ENCODE measurements at regions of chr17 and their contacts with region 1.

Region 1: DNA sequence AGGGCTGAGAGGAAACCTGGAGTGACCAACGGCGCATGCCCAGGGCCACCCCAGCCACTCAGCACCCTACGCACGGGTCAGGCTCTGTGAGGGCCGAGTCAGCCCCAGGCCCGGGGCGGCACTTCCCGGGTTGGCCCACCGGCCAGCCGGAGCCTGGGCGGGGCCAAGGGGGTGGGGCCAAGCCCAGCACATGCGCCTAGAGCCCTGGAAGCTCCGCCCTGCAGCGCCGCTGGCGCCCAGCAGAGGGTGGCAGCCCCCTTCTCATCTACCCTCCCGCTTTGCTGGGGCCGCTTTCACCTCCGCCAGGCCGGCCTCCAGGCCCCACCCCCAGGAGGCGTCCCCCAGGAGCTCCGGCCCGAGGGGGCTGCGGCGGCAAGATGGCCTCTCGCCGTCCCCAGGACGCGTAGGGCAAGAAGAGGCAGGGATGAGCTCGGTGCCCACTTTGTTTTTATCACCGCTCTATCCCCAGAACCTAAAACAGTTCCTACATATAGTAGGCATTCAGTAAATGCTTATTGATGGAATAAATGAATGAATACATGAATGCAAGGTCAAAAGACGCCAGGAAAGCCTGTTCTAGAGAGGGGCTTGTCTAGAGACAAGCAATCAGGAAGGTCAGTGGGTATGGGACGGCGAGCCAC is 31.3 kb downstream of the MYO18A start:
- DNase-seq: peak; percentile 91
- H3K4me3 Mint-ChIP-seq: peak overlapping the region; percentile 69
- H3K27ac Mint-ChIP-seq: peak overlapping the region; percentile 84
- H3K4me1 Mint-ChIP-seq: peaks cover 58% of the 10 kb centered on the region
- H3K27me3 Mint-ChIP-seq: no peaks in the 10 kb centered on the region

Region 2: DNA sequence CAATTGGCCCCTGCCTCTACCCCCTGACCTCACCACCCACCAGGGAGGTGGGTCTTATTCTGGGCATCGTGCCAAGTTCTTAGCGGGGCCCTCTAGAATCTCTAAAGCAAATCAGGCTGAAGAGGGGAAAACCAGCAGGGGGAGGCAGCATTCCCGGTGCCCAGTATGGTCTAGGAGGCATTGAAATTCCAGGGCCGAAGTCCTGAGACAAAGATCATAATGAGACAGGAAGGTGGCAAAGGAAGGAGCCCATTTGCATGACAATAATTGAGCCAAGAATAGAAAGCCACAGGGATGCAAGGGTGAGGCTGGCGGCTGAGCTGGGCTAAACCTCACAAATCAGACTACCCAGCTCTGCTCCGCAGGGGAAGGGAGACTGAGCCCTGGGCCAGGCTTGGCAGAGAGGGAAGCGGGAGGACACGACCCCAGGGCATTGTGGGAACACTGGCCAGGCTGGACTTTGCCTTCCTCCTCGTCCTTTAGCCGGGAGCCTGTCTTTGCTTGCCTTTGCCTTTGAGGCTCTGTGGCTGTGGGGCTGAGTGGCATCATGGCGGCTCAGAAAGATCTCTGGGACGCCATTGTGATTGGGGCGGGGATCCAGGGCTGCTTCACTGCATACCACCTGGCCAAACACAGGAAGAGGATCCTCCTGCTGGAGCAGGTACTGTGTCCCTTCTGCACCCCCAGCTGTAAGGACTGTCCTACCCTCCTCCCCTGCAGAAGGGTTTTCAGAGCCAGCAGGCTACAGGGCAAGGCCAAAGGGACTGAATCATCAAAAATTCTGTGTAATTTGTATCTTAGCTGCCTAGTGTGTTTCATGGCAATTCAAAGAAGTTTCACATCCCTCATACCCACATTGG is 106.0 kb before region 1 on chr17 and contains the start of gene PIPOX:
- CTCF ChIA-PET with region 1: no interaction called
- POLR2A ChIA-PET with region 1: no interaction called
- DNase-seq: no peak
- H3K4me3 Mint-ChIP-seq: no peak within 1 kb of the TSS
- H3K27ac Mint-ChIP-seq: no peak within 1 kb of the TSS
- H3K4me1 Mint-ChIP-seq: peaks cover 7% of the 10 kb centered on the region
- H3K27me3 Mint-ChIP-seq: peaks cover 5% of the 10 kb centered on the region
- total RNA-seq, gene PIPOX: 1.6 to 1.7 TPM

Region 3: GRCh38 chr17:29124117-29124924 is 24.6 kb before region 1 on chr17:
- CTCF ChIA-PET with region 1: interaction called, 18 read pairs
- POLR2A ChIA-PET with region 1: no interaction called
- DNase-seq: peak; percentile 66
- H3K4me3 Mint-ChIP-seq: no peak overlapping the region
- H3K27ac Mint-ChIP-seq: no peak overlapping the region
- H3K4me1 Mint-ChIP-seq: peaks cover 4% of the 10 kb centered on the region
- H3K27me3 Mint-ChIP-seq: no peaks in the 10 kb centered on the region

Region 4: GRCh38 chr17:29162738-29163341 is 13.9 kb after region 1 on chr17:
- CTCF ChIA-PET with region 1: interaction called, 25 read pairs
- POLR2A ChIA-PET with region 1: no interaction called
- DNase-seq: no peak
- H3K4me3 Mint-ChIP-seq: no peak overlapping the region
- H3K27ac Mint-ChIP-seq: no peak overlapping the region
- H3K4me1 Mint-ChIP-seq: peaks cover 17% of the 10 kb centered on the region
- H3K27me3 Mint-ChIP-seq: no peaks in the 10 kb centered on the region

Region 5: GRCh38 chr17:29180034-29180787 is 31.3 kb after region 1 on chr17 and contains the start of gene MYO18A:
- CTCF ChIA-PET with region 1: interaction called, 99 read pairs
- POLR2A ChIA-PET with region 1: interaction called, 4 read pairs
- DNase-seq: peak; percentile 78
- H3K4me3 Mint-ChIP-seq: peak within 1 kb of the TSS; percentile 58
- H3K27ac Mint-ChIP-seq: peak within 1 kb of the TSS; percentile 27
- H3K4me1 Mint-ChIP-seq: peaks cover 36% of the 10 kb centered on the region
- H3K27me3 Mint-ChIP-seq: peaks cover 15% of the 10 kb centered on the region
- total RNA-seq, gene MYO18A: 82.2 to 101 TPM

Region 6: DNA sequence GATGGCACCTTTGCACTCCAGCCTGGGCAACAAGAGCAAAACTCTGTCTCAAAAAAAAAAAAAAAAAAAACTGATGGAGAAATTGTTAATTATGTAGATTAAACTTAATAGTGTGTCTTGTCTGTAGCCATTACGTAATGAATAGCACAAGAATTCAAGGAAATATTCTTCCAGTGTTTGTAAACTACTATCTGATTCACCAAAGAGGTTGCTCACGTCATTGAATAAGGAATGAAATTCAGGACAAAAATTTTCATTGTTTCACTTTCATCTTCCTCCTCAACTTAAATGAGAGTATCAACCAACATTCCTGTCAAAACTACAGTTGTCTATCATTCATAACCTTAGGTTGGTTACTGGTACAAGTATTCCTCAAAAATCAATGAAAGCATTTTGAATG is 62.0 kb after region 1 on chr17:
- CTCF ChIA-PET with region 1: interaction called, 30 read pairs
- POLR2A ChIA-PET with region 1: no interaction called
- DNase-seq: no peak
- H3K4me3 Mint-ChIP-seq: no peak overlapping the region
- H3K27ac Mint-ChIP-seq: no peak overlapping the region
- H3K4me1 Mint-ChIP-seq: no peaks in the 10 kb centered on the region
- H3K27me3 Mint-ChIP-seq: peaks cover 2% of the 10 kb centered on the region

Region 7: GRCh38 chr17:29292992-29293889 is 144.3 kb after region 1 on chr17:
- CTCF ChIA-PET with region 1: interaction called, 11 read pairs
- POLR2A ChIA-PET with region 1: interaction called, 3 read pairs
- DNase-seq: peak; percentile 62
- H3K4me3 Mint-ChIP-seq: peak overlapping the region; percentile 97
- H3K27ac Mint-ChIP-seq: peak overlapping the region; percentile 99
- H3K4me1 Mint-ChIP-seq: peaks cover 38% of the 10 kb centered on the region
- H3K27me3 Mint-ChIP-seq: no peaks in the 10 kb centered on the region

Measured in activated CD4-positive, alpha-beta T cell treated with anti-CD3 and anti-CD28 coated beads, Interleukin-2, amount 10 ng/mL, durations not matched to agents 7 days and 5 days (primary cell).